ENCODE measurements at regions of chr16 and their contacts with region 1.

Region 1: DNA sequence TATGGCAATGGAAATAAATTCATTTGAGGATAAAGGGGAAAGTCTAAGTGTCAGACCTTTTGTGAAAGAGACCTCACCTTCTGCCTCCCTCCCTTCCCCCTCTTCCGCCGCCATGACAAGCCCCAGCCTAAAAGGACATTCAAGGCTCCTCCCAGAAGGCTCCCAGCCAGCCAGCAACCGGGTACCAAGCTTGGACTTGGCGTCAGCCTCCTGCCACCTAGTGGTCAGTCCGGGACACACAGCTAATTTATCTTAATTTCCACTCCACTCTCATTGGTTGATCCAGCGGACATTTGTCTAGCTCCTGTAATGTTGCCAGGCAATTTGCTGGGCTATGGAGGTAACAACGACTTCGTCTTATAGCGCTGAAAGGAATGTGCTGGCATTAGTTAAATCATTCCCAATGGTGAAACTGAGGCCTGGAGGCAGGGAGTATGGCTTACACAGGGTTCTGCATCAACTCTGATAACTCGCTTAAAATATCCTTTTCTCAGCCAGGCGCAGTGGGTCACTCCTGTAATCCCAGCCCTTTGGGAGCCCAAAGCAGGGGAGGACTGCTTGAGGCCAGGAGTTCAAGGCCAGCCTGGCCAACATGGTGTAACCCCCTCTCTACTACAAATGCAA is 19.3 kb upstream of the CLEC3A start:
- DNase-seq: peak; percentile 49
- H3K4me3 ChIP-seq: no peak overlapping the region
- CTCF ChIP-seq: peak; percentile 82

Region 2: DNA sequence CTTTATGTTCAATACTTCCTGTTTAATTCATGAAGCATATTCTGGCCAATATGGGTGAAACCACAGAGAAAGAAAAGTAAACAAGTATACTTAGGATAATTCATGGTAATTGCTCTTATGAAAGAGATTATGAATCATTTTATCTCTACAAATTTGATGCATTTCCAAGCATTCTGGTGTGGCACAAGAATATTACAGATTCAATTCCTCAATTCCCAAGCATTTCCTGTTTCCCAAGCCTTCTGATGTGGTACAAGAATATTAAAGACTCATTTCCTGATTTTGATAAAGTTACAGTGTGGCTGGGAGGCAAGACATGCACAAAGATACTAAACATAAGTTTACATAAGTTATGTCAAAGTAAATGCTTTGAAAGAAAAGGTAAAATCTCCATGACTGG is 406.8 kb before region 1 on chr16:
- CTCF ChIA-PET with region 1: interaction called, 13 read pairs
- POLR2A ChIA-PET with region 1: no interaction called
- DNase-seq: no peak
- H3K4me3 ChIP-seq: no peak overlapping the region
- CTCF ChIP-seq: no peak

Region 3: DNA sequence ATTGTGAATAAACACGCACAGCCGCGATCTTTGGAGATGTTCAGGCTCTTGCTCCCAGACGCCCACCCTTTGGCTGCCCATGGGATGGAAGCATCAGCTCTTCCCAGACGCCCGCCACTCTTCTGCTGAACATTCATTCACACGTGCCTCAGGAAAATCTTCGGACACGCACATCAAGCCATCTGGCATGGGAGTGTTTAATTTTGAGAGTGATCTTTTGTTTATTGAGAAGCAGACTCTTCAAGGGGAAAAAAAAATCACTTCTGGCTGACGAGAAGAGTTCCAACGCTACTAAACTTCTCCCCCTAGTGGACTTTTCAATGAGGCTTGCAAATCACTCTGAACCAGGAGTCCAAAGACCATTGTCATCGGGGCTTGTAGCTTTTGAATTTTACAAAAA is 342.7 kb before region 1 on chr16:
- CTCF ChIA-PET with region 1: interaction called, 10 read pairs
- POLR2A ChIA-PET with region 1: no interaction called
- DNase-seq: no peak
- H3K4me3 ChIP-seq: no peak overlapping the region
- CTCF ChIP-seq: peak; percentile 60

Region 4: GRCh38 chr16:77675464-77676324 is 327.3 kb before region 1 on chr16:
- CTCF ChIA-PET with region 1: interaction called, 101 read pairs
- POLR2A ChIA-PET with region 1: no interaction called
- DNase-seq: no peak
- H3K4me3 ChIP-seq: no peak overlapping the region; the same call in 1 of the 2 replicates
- CTCF ChIP-seq: peak; percentile 72

Region 5: GRCh38 chr16:77684181-77684526 is 318.9 kb before region 1 on chr16:
- CTCF ChIA-PET with region 1: interaction called, 12 read pairs
- POLR2A ChIA-PET with region 1: no interaction called
- DNase-seq: no peak
- H3K4me3 ChIP-seq: no peak overlapping the region
- CTCF ChIP-seq: no peak

Region 6: GRCh38 chr16:77987810-77988209 is 15.2 kb before region 1 on chr16:
- CTCF ChIA-PET with region 1: interaction called, 46 read pairs
- POLR2A ChIA-PET with region 1: no interaction called
- DNase-seq: no peak
- H3K4me3 ChIP-seq: no peak overlapping the region
- CTCF ChIP-seq: no peak

Measured in AG04449 (cell line).